CD14-positive monocyte (primary cell): ENCODE measurements at regions of chr13 and their contacts with region 1.

Region 1: DNA sequence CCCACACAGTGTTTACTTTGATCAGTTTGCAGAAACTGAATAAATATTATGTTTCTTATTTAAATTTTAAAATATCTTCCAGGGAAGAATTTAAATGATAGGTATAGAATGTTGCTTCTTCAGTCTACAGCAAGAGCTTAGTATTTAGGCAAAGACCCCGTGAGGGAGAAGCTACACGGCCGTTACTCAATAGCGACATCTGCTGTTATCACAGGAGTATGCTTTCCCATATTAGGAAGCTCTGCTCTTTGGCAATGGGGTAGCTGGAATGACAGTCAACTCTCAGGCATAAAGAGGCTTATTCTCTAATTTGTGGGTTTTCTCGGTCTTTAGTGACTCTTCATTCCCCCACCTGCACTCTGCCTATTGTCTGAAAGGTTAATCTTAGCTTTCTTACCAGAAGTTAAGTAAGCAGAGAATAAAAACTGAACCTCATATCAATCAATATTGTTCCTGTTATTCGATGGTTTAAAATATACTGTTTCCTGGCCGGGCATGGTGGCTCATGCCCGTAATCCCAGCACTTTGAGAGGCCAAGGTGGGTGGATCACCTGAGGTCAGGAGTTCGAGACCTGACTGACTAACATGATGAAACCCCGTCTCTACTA is 13.2 kb upstream of the LHFPL6 start:
- DNase-seq: peak; percentile 23 to 59 (median 59)
- H3K4me3 ChIP-seq: no peak overlapping the region
- H3K4me3 Mint-ChIP-seq: no peak overlapping the region
- H3K27ac ChIP-seq: no peak overlapping the region
- H3K27ac Mint-ChIP-seq: no peak overlapping the region
- H3K4me1 ChIP-seq: no peaks in the 10 kb centered on the region
- H3K4me1 Mint-ChIP-seq: no peaks in the 10 kb centered on the region
- H3K27me3 ChIP-seq: no peaks in the 10 kb centered on the region
- H3K27me3 Mint-ChIP-seq: peaks cover 0 to 5% (median 0%) of the 10 kb centered on the region in 3 donors
- CTCF ChIP-seq: peak; percentile 97

Region 2: GRCh38 chr13:39144941-39145533 is 471.2 kb before region 1 on chr13:
- intact Hi-C with region 1: loop called in 1 of 2 experiments (anchors 10 kb)
- DNase-seq: peak; percentile 0 to 16 (median 4)
- H3K4me3 ChIP-seq: no peak overlapping the region
- H3K4me3 Mint-ChIP-seq: no peak overlapping the region
- H3K27ac ChIP-seq: no peak overlapping the region
- H3K27ac Mint-ChIP-seq: no peak overlapping the region
- H3K4me1 ChIP-seq: no peaks in the 10 kb centered on the region
- H3K4me1 Mint-ChIP-seq: no peaks in the 10 kb centered on the region
- H3K27me3 ChIP-seq: no peaks in the 10 kb centered on the region
- H3K27me3 Mint-ChIP-seq: peaks cover 4 to 15% (median 7%) of the 10 kb centered on the region in 3 donors
- CTCF ChIP-seq: peak; percentile 41

Region 3: DNA sequence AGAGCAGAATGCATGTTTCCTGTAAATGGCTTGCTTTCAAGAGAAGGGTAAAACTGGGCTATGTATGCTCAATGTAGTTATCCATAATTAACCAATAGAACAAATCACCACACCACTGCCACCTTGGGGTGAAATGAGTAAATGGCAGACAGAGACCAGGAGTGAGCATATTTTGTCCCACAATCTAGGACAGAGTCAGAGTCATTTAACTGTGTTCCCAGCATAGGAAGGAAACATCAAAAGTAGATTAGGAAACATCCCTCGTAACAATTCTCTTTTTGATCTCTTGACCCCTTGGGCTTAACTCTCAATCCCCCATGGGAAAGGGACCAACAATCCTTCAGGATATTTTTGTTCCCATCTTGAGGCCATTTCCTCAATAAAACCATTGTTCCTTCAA is 353.2 kb before region 1 on chr13:
- intact Hi-C with region 1: loop called (anchors 10 kb)
- DNase-seq: peak in 1 of 3 donors; percentile 2
- H3K4me3 ChIP-seq: no peak overlapping the region
- H3K4me3 Mint-ChIP-seq: no peak overlapping the region
- H3K27ac ChIP-seq: no peak overlapping the region
- H3K27ac Mint-ChIP-seq: no peak overlapping the region
- H3K4me1 ChIP-seq: no peaks in the 10 kb centered on the region
- H3K4me1 Mint-ChIP-seq: no peaks in the 10 kb centered on the region
- H3K27me3 ChIP-seq: no peaks in the 10 kb centered on the region
- H3K27me3 Mint-ChIP-seq: peaks cover 3 to 5% (median 4%) of the 10 kb centered on the region in 3 donors
- CTCF ChIP-seq: peak; percentile 70

Region 4: DNA sequence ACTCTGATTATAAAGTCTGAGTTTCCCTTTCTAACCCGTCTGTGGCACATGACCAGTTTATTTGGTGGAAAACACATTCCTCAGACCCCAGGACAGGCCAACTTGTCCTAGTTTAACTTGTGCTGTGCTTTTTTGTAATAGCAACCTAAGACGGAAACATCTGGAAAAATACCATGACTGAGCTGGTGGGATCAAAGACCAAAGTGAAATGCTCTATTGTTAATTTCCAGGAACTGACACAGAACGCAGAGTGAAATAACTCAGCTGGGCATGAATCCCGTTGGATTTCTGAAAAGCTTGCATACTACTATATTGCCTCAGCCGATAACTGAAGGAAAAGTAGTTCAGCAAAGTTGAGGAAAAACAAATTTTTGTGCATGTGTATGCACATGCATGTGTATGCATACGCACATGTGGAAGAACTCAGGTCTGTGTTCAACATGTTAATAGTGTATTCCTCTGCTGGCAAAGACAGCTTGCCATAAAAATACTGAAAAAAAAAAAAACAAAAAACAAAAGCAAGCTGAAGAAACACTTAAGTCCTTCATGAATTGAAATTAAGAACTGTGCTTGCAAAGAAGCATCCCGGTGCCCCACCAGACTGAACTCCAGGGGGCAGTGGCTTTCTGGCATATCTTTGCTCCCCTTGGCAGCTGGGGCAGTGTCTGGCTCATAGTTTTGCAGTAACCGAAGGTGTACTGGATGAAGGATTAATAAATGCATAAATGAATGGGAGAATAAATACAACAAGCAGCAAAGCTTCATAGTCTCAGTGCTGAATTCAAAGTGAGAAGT is 201.0 kb before region 1 on chr13:
- intact Hi-C with region 1: loop called in 1 of 2 experiments (anchors 10 kb)
- DNase-seq: no peak
- H3K4me3 ChIP-seq: no peak overlapping the region
- H3K4me3 Mint-ChIP-seq: no peak overlapping the region
- H3K27ac ChIP-seq: no peak overlapping the region
- H3K27ac Mint-ChIP-seq: no peak overlapping the region
- H3K4me1 ChIP-seq: peaks cover 28 to 40% of the 10 kb centered on the region in 2 donors
- H3K4me1 Mint-ChIP-seq: peaks cover 30% of the 10 kb centered on the region
- H3K27me3 ChIP-seq: no peaks in the 10 kb centered on the region
- H3K27me3 Mint-ChIP-seq: no peaks in the 10 kb centered on the region
- CTCF ChIP-seq: peak; percentile 48